Lower leg skin (tissue), 4 donors: ENCODE measurements at regions of chr11 and their contacts with region 1.

Region 1: GRCh38 chr11:126499131-126499752 is 143.8 kb downstream of the ST3GAL4 start:
- DNase-seq: no peak
- H3K4me3 ChIP-seq: no peak overlapping the region
- CTCF ChIP-seq: no peak
- POLR2A ChIP-seq: no peak

Region 2: GRCh38 chr11:126452241-126453101 is 46.8 kb before region 1 on chr11:
- intact Hi-C with region 1: loop called (anchors 2 kb)
- DNase-seq: no peak
- H3K4me3 ChIP-seq: no peak overlapping the region
- CTCF ChIP-seq: no peak
- POLR2A ChIP-seq: no peak

Region 3: GRCh38 chr11:126748100-126748791 is 249.0 kb after region 1 on chr11:
- intact Hi-C with region 1: no loop called
- DNase-seq: no peak
- H3K4me3 ChIP-seq: no peak overlapping the region
- CTCF ChIP-seq: no peak
- POLR2A ChIP-seq: no peak

Region 4: GRCh38 chr11:127362754-127363153 is 863.5 kb after region 1 on chr11:
- intact Hi-C with region 1: no loop called
- DNase-seq: no peak
- H3K4me3 ChIP-seq: no peak overlapping the region
- CTCF ChIP-seq: no peak
- POLR2A ChIP-seq: no peak